Activated CD4-positive, alpha-beta memory T cell treated with anti-CD3 and anti-CD28 coated beads for 36 hours (primary cell): ENCODE measurements at regions of chr16 and their contacts with region 1.

Region 1: DNA sequence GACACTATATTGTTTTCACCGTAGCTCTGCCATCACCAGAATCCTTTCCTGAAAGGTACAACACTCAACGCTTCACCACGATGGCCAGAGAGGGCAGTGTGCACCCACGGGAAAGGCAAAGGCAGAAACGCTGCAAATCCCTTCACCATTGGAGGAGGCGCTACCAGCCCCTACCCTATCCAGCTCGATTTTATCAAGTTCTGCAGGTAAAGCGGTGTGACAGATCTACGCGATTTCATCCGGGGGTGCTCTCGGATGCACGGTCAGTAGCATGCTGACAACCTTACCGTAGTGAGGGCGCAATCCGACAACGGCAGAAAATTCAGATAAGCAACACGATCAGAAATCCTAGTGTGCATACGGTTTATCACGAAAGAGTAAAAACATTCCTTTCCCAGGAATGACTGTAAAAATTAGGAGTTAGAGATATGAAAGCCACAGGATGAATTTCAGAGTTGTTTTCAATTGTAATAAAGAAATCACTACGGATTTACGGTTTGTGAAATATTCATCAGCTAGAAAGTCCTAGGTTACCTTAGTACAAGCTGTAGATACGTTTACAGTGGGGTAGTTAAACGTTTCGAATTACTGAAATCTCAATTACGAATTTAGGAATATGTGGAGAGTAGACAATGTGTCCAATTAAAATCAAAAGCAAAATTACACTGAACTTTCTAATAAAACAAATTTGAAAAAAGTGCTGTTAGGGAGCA is 1.8 kb downstream of the NETO2 start:
- DNase-seq: peak; percentile 92
- H3K4me3 Mint-ChIP-seq: peak overlapping the region; percentile 78
- H3K27ac Mint-ChIP-seq: peak overlapping the region; percentile 49
- H3K4me1 Mint-ChIP-seq: peaks cover 52% of the 10 kb centered on the region
- H3K27me3 Mint-ChIP-seq: peaks cover 6% of the 10 kb centered on the region

Region 2: GRCh38 chr16:46830902-46831647 is 310.9 kb before region 1 on chr16 and contains the start of gene C16orf87:
- CTCF ChIA-PET with region 1: no interaction called
- POLR2A ChIA-PET with region 1: no interaction called
- intact Hi-C with region 1: loop called (anchors 2 kb)
- DNase-seq: peak; percentile 93
- H3K4me3 Mint-ChIP-seq: peak within 1 kb of the TSS; percentile 90
- H3K27ac Mint-ChIP-seq: peak within 1 kb of the TSS; percentile 97
- H3K4me1 Mint-ChIP-seq: peaks cover 33% of the 10 kb centered on the region
- H3K27me3 Mint-ChIP-seq: no peaks in the 10 kb centered on the region
- total RNA-seq, gene C16orf87: 18.1 to 18.2 TPM

Region 3: GRCh38 chr16:47018223-47018891 is 123.6 kb before region 1 on chr16:
- CTCF ChIA-PET with region 1: interaction called, 6 read pairs
- POLR2A ChIA-PET with region 1: no interaction called
- intact Hi-C with region 1: loop called (anchors 5 kb)
- DNase-seq: peak; percentile 79
- H3K4me3 Mint-ChIP-seq: no peak overlapping the region
- H3K27ac Mint-ChIP-seq: no peak overlapping the region
- H3K4me1 Mint-ChIP-seq: peaks cover 19% of the 10 kb centered on the region
- H3K27me3 Mint-ChIP-seq: no peaks in the 10 kb centered on the region

Region 4: DNA sequence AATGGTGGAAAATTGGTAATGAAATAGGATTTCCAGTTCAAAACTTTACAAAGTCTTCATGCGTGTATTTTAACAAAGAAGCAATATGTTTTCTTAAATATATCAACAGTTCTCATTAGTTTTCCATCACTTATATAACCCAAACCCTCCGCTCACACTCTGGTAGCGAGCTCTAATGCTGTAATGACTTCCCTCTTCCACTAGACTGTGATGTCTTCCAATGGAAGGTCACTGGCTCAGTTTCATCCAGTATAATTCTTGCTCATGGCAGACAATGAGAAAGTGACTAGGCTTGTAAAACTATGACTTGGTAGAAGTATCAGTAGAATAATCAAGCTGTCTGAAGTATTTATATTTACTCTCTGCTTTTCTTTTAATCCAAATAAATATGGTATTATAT is 31.0 kb before region 1 on chr16:
- CTCF ChIA-PET with region 1: interaction called, 47 read pairs
- POLR2A ChIA-PET with region 1: interaction called, 13 read pairs
- intact Hi-C with region 1: loop called (anchors 1 kb)
- DNase-seq: no peak
- H3K4me3 Mint-ChIP-seq: no peak overlapping the region
- H3K27ac Mint-ChIP-seq: no peak overlapping the region
- H3K4me1 Mint-ChIP-seq: peaks cover 21% of the 10 kb centered on the region
- H3K27me3 Mint-ChIP-seq: no peaks in the 10 kb centered on the region

Region 5: GRCh38 chr16:47182318-47182717 is 40.4 kb after region 1 on chr16:
- CTCF ChIA-PET with region 1: no interaction called
- POLR2A ChIA-PET with region 1: no interaction called
- intact Hi-C with region 1: no loop called
- DNase-seq: no peak
- H3K4me3 Mint-ChIP-seq: no peak overlapping the region
- H3K27ac Mint-ChIP-seq: no peak overlapping the region
- H3K4me1 Mint-ChIP-seq: no peaks in the 10 kb centered on the region
- H3K27me3 Mint-ChIP-seq: no peaks in the 10 kb centered on the region

Region 6: GRCh38 chr16:47310792-47311211 is 168.9 kb after region 1 on chr16:
- CTCF ChIA-PET with region 1: no interaction called
- POLR2A ChIA-PET with region 1: no interaction called
- intact Hi-C with region 1: no loop called
- DNase-seq: no peak
- H3K4me3 Mint-ChIP-seq: no peak overlapping the region
- H3K27ac Mint-ChIP-seq: no peak overlapping the region
- H3K4me1 Mint-ChIP-seq: no peaks in the 10 kb centered on the region
- H3K27me3 Mint-ChIP-seq: no peaks in the 10 kb centered on the region

Region 7: GRCh38 chr16:47574091-47575054 is 432.4 kb after region 1 on chr16:
- CTCF ChIA-PET with region 1: interaction called, 6 read pairs
- POLR2A ChIA-PET with region 1: no interaction called
- intact Hi-C with region 1: loop called (anchors 2 kb)
- DNase-seq: peak; percentile 67
- H3K4me3 Mint-ChIP-seq: peak overlapping the region; percentile 26
- H3K27ac Mint-ChIP-seq: peak overlapping the region; percentile 80
- H3K4me1 Mint-ChIP-seq: peaks cover 64% of the 10 kb centered on the region
- H3K27me3 Mint-ChIP-seq: no peaks in the 10 kb centered on the region

Region 8: DNA sequence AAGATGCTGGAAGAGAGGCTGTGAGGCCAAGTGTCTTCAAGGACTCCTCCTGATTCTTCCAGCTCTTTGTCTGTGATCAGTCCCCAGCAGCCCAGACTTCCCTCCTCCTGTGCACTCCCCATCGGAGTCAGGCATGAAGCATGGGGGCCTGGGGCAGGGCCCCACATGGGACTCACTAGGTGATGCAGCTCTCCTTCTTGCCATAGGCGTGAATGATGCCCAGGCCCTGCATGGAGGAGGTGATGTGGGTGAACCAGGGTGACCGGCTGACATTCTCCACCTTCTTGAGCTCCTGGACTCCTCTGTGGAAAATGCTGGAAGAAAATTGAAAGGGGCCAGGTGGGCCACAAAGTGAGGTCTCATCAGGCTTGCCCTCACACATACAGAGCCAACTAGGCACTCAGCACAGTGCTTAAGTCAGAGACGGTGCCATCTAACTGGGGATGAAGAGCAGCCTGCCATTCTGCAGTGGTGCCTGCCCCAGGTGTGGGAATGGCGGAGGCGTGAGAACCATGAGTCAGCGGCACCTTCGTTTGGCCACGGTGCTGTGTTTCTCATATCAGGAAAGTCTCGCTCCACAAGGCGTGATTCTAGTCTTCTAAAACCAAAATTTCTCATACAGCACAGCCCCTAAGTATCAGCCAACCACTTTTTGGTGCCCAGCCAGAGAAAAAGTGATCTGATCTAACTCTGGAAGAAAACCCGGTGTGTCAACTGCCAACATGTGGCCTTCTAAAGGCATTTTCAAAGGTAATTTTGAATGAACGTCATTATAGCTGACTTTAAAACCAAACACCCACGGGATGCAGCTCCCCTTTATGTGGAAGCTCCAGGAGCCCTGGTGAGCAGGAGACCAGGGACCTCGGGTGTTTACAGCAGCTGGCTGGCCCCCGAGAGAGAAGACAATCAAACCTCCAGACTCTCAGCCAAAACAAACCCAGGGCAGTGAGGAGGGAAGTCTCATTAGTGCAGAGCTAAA is 959.1 kb after region 1 on chr16:
- CTCF ChIA-PET with region 1: interaction called, 4 read pairs
- POLR2A ChIA-PET with region 1: no interaction called
- intact Hi-C with region 1: loop called (anchors 5 kb)
- DNase-seq: peak; percentile 86
- H3K4me3 Mint-ChIP-seq: no peak overlapping the region
- H3K27ac Mint-ChIP-seq: no peak overlapping the region
- H3K4me1 Mint-ChIP-seq: peaks cover 18% of the 10 kb centered on the region
- H3K27me3 Mint-ChIP-seq: peaks cover 32% of the 10 kb centered on the region

Region 9: DNA sequence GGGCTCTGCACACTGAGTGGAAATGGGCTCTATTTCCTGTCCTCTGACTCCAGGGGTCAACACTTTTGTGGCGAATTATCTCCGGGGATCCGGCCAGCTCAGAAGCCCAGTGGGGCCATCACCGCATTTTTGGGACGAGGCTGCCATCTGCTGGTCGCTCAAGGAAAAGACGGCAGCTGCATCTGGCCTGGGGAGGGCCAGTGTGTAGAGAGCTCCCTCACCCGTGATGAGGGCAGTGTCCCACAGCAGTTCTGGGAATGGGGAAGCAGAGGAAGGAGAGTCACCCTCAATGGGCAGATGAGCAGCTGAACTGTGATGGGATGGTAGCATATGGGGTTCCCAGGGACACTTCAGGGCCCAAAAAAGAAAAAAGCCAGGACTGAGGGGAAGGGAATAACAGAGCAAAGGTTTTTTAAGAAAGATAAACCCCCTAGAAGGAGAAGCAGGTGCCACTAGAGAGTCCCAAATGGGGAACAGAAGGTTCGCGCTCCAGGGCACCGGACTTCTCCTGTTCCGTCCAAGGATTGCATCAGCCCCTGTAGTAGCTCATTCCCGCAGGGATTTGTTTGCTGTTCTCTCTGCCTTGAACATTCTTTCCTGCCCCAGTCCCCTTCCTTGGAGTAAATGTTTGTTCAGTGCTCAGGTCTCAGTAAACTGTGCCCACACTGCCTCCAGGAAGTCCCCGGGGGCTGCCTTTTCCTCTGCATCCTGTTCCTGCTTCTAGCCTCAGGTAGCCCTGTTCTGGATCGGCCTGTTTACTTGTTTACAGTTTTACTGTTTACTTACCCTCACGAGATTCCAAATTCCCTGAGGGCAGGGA is 1023.2 kb after region 1 on chr16:
- CTCF ChIA-PET with region 1: interaction called, 69 read pairs
- POLR2A ChIA-PET with region 1: no interaction called
- intact Hi-C with region 1: no loop called
- DNase-seq: peak; percentile 80
- H3K4me3 Mint-ChIP-seq: no peak overlapping the region
- H3K27ac Mint-ChIP-seq: no peak overlapping the region
- H3K4me1 Mint-ChIP-seq: peaks cover 5% of the 10 kb centered on the region
- H3K27me3 Mint-ChIP-seq: peaks cover 6% of the 10 kb centered on the region